ENCODE measurements at regions of chr6 and their contacts with region 1.

Region 1: DNA sequence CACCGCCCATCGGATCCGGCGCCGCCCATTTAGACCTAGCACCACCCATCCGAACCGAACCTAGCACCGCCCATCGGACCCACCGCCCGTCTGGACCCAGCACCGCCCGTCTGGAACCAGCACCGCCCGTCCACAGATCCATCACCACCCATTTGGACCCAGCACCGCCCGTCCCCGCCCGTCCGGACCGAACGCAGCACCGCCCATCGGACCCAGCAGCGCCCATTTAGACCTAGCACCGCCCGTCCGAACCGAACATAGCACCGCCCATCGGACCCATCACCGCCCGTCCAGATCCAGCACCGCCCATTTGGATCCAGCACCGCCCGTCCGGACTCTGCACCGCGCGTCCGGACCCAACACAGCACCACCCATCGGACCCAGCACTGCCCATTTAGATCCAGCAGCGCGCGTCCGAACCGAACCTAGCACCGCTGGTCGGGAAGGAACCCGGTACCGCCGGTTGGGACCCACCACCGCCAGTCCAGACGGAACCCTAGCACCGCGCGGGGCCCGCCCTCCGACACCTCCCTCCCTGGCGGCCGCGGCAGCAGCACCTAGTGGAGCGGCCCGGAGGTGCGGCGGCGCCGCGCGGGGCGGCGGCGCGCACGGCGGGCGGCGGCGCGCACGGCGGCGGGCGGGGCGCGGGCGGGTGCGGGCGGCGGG is 348 bp upstream of the AFDN start:
- DNase-seq: peak; percentile 55
- H3K4me3 ChIP-seq: peak overlapping the region; percentile 96 to 100 (median 97)
- H3K27ac ChIP-seq: peak overlapping the region; percentile 32
- H3K4me1 ChIP-seq: peaks cover 30% of the 10 kb centered on the region
- H3K27me3 ChIP-seq: no peaks in the 10 kb centered on the region
- CTCF ChIP-seq: peak; percentile 3 to 55

Region 2: GRCh38 chr6:167699141-167699931 is 127.0 kb before region 1 on chr6:
- CTCF ChIA-PET with region 1: no interaction called
- dilution Hi-C with region 1: no loop called
- in situ Hi-C with region 1: no loop called
- intact Hi-C with region 1: no loop called
- DNase-seq: no peak
- H3K4me3 ChIP-seq: no peak overlapping the region
- H3K27ac ChIP-seq: no peak overlapping the region
- H3K4me1 ChIP-seq: no peaks in the 10 kb centered on the region
- H3K27me3 ChIP-seq: no peaks in the 10 kb centered on the region
- CTCF ChIP-seq: no peak

Region 3: GRCh38 chr6:167849846-167850459 is 23.6 kb after region 1 on chr6:
- CTCF ChIA-PET with region 1: no interaction called
- dilution Hi-C with region 1: no loop called
- in situ Hi-C with region 1: no loop called
- intact Hi-C with region 1: loop called (anchors 1 kb)
- DNase-seq: peak; percentile 95
- H3K4me3 ChIP-seq: peak overlapping the region; percentile 22 to 40 (median 36)
- H3K27ac ChIP-seq: peak overlapping the region; percentile 98
- H3K4me1 ChIP-seq: peaks cover 30% of the 10 kb centered on the region
- H3K27me3 ChIP-seq: no peaks in the 10 kb centered on the region
- CTCF ChIP-seq: no peak

Region 4: GRCh38 chr6:167860550-167861226 is 34.3 kb after region 1 on chr6:
- CTCF ChIA-PET with region 1: no interaction called
- dilution Hi-C with region 1: no loop called
- in situ Hi-C with region 1: no loop called
- intact Hi-C with region 1: loop called (anchors 5 kb)
- DNase-seq: no peak
- H3K4me3 ChIP-seq: no peak overlapping the region
- H3K27ac ChIP-seq: no peak overlapping the region
- H3K4me1 ChIP-seq: peaks cover 25% of the 10 kb centered on the region
- H3K27me3 ChIP-seq: no peaks in the 10 kb centered on the region
- CTCF ChIP-seq: no peak

Region 5: DNA sequence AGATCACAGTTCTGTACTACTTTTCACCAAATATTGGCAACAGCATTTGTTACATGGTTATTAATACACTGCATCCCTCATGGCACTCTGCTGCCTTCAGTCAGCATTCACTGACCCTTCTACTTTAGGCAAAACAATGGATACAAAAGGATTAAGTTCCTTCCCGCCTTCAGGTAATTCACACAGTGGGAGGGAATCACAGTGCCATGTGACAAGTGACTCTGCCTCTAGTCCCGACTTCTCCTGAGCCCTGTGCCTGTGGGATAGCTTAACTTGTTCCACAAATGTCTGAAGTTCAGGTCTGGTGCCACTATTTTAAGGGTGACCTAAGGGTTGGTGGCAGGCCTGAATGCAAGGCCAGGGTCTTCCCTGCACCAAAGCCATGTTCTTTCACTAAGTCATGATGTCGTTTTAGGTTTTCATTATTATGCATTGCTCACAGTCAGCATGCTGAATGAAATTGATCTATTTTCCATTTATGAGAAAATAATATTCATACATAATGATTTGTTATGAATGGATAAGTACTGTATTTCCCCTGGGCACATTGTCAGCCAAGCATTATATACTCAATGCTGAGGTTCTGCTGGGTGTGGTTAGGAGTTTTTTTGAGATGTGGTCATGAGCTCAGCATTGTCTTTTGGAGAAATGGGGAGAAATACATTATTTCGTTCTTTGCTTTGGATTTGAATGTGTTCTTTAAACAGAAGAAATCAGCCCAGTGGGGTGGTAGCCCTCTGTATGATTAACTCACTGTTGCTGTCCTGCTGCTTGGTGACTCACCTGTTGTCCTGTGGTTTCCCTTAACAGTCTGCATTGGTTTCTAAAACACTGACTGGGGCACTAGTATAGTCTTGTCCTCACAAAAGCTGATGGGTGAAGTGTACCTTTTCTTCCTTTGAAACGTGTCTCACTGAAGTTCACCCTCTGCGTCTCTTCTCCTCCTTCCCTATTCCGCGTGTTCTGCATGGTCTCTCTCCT is 66.8 kb after region 1 on chr6:
- CTCF ChIA-PET with region 1: no interaction called
- dilution Hi-C with region 1: no loop called
- in situ Hi-C with region 1: no loop called
- intact Hi-C with region 1: loop called (anchors 2 kb)
- DNase-seq: peak; percentile 91
- H3K4me3 ChIP-seq: no peak overlapping the region
- H3K27ac ChIP-seq: peak overlapping the region; percentile 59
- H3K4me1 ChIP-seq: peaks cover 17% of the 10 kb centered on the region
- H3K27me3 ChIP-seq: no peaks in the 10 kb centered on the region
- CTCF ChIP-seq: no peak

Region 6: GRCh38 chr6:168150551-168151320 is 324.4 kb after region 1 on chr6:
- CTCF ChIA-PET with region 1: no interaction called
- dilution Hi-C with region 1: no loop called
- in situ Hi-C with region 1: no loop called
- intact Hi-C with region 1: no loop called
- DNase-seq: no peak
- H3K4me3 ChIP-seq: no peak overlapping the region
- H3K27ac ChIP-seq: no peak overlapping the region
- H3K4me1 ChIP-seq: no peaks in the 10 kb centered on the region
- H3K27me3 ChIP-seq: no peaks in the 10 kb centered on the region
- CTCF ChIP-seq: no peak

Measured in mammary epithelial cell (primary cell).